ENCODE measurements at regions of chr9 and their contacts with region 1.

Region 1: GRCh38 chr9:120868676-120869359 is 8.2 kb downstream of the PHF19 start:
- DNase-seq: peak; percentile 98
- ATAC-seq: peak; percentile 97
- H3K4me3 Mint-ChIP-seq: peak overlapping the region; percentile 82
- H3K27ac Mint-ChIP-seq: peak overlapping the region; percentile 99
- H3K4me1 Mint-ChIP-seq: peaks cover 50% of the 10 kb centered on the region
- H3K27me3 Mint-ChIP-seq: no peaks in the 10 kb centered on the region

Region 2: GRCh38 chr9:120892748-120893610 is 24.2 kb after region 1 on chr9:
- CTCF ChIA-PET with region 1: interaction called, 18 read pairs
- POLR2A ChIA-PET with region 1: interaction called, 306 read pairs
- DNase-seq: peak; percentile 80
- ATAC-seq: peak; percentile 65
- H3K4me3 Mint-ChIP-seq: peak overlapping the region; percentile 70
- H3K27ac Mint-ChIP-seq: peak overlapping the region; percentile 95
- H3K4me1 Mint-ChIP-seq: peaks cover 90% of the 10 kb centered on the region
- H3K27me3 Mint-ChIP-seq: no peaks in the 10 kb centered on the region

Region 3: DNA sequence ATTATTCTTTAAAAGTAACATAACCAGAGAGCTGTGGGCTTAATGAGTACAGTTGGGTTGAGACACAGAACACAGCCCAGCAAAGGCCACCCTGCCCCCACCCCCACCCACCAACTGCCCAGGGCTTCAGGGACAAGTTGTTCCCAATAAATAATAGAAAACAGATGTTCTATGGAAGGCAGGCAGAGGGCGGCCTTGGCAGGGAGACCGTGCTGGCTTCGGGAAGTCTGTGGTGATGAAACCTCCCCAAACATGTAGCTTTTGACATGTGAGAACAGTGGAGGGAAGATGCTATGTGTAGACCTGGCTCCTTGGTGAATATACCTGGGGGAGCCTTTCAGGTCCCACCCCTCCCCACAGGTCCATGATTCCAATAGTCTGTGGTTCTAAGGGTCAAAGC is 47.8 kb after region 1 on chr9:
- CTCF ChIA-PET with region 1: interaction called, 14 read pairs
- POLR2A ChIA-PET with region 1: interaction called, 344 read pairs
- DNase-seq: no peak
- ATAC-seq: no peak
- H3K4me3 Mint-ChIP-seq: peak overlapping the region; percentile 34
- H3K27ac Mint-ChIP-seq: peak overlapping the region; percentile 80
- H3K4me1 Mint-ChIP-seq: peaks cover 86% of the 10 kb centered on the region
- H3K27me3 Mint-ChIP-seq: no peaks in the 10 kb centered on the region

Region 4: DNA sequence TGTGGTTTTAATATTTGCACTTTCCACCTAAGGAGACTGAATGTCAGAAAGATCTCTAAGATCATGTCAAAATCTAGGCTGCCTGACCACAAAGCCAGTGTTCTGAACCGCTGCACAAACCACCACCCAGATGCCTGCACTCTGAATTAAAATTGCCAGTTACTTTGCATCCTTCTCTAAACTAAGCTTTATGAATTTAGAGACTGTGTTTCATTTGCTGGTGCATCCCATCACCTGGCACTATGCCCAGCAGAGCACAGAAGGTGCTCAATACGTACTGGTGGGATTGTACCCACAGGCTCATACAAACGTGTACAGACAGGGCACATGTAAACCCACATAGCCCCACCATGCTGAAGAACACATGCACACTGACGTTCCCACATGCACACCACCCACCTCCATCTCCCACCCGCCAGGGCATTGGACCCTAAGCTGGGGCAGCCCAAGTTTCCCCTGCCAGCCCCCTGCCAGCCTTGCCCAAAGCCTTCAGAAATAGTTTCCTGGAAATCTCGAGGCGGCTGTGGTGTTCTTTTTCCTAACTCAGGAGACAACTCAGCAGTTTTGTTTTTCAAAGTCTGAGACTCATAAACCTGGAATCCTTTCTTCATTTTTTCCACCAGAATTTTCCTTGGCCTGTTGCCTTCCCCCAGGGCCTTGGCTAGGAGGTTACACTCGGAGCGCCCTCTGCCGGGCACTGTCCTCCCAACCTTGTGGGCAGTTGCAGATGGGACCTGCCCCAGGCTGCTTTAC is 67.4 kb after region 1 on chr9:
- CTCF ChIA-PET with region 1: interaction called, 66 read pairs
- POLR2A ChIA-PET with region 1: interaction called, 344 read pairs
- DNase-seq: peak; percentile 91
- ATAC-seq: peak; percentile 72
- H3K4me3 Mint-ChIP-seq: peak overlapping the region; percentile 15
- H3K27ac Mint-ChIP-seq: peak overlapping the region; percentile 77
- H3K4me1 Mint-ChIP-seq: peaks cover 62% of the 10 kb centered on the region
- H3K27me3 Mint-ChIP-seq: peaks cover 5% of the 10 kb centered on the region

Region 5: DNA sequence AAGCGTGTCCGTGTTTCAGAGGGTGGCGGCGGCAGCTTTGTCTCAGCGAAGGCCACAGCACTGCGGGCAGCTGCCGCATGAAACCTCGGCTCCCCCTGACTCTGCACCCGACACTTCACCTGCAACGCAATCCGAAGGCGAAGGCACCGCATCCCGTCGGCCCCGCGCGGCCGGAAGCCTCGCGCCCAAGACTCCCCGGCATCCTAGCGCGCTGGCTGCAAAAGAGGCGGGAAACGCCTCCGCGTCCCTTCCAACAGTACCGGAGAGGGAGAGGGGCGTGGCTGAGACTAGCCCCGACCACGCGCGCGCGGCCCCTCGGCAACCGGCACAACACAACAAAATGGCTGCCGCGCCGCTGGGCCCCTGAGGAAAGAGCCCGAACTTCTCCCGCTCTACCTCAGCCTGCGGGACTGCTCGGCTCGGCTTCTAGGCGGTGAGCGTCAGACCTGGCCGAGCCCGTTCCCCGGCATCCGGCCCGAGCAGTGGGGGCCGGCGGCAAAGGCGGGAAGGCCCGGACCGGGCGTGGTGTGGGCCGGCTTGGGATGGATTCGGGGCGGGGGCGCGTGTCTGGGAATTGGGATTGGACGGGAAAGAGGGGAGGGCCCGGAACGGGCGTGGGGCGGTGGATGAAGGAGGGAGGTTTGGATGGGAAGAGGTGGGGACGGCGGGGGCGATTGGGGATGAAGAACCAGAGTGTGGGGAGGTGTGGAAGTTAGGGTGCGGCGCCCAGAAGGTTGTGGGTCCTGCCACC is 206.0 kb after region 1 on chr9 and contains the start of gene CNTRL:
- CTCF ChIA-PET with region 1: interaction called, 11 read pairs
- POLR2A ChIA-PET with region 1: no interaction called
- DNase-seq: peak; percentile 96
- ATAC-seq: peak; percentile 87
- H3K4me3 Mint-ChIP-seq: peak within 1 kb of the TSS; percentile 99
- H3K27ac Mint-ChIP-seq: peak within 1 kb of the TSS; percentile 98
- H3K4me1 Mint-ChIP-seq: peaks cover 53% of the 10 kb centered on the region
- H3K27me3 Mint-ChIP-seq: no peaks in the 10 kb centered on the region
- total RNA-seq, gene CNTRL: 80.8 to 84.3 TPM